ENCODE measurements at regions of chr7 and their contacts with region 1.

Region 1: DNA sequence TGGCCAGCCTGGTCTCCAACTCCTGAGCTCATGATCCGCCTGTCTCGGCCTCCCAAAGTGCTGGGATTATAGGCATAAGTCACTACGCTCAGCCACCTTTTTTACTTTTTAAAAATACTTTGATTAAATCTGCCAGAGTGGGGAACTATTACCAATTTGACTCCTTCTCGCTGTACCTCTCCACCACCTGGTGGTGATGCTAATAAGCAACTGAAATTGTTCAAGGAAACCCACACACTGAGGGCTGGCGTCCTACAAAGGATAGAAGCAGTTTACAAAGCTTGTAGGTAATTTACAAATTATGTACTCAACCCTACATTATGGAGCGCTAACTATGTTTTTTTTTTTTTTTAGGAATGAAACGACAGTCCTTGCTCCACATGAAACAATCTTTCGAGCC is 111.1 kb downstream of the CPED1 start:
- DNase-seq: no peak
- H3K4me3 ChIP-seq: no peak overlapping the region
- H3K27ac ChIP-seq: no peak overlapping the region
- H3K4me1 ChIP-seq: no peaks in the 10 kb centered on the region
- H3K27me3 ChIP-seq: no peaks in the 10 kb centered on the region
- CTCF ChIP-seq: no peak
- POLR2A ChIP-seq: no peak

Region 2: DNA sequence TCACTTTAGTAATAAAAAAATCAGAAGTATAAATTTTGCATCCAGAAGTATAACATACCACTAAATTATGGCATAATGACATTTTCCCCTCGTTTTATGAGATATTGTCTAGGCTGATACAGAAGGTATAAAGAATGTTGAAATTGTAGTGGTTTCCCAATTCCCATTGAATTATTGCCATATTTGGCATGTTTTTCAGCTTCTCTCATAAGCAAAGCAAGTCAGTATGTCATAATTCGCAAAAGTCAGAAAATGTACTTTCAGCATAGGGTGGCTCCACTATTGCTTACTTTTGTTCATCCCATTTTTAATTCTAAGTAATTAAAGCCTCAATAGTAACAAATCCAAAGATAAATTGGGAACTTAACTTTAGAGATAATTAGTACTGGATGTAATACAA is 753.7 kb after region 1 on chr7:
- intact Hi-C with region 1: loop called (anchors 5 kb)
- DNase-seq: no peak
- H3K4me3 ChIP-seq: no peak overlapping the region
- H3K27ac ChIP-seq: no peak overlapping the region
- H3K4me1 ChIP-seq: no peaks in the 10 kb centered on the region
- H3K27me3 ChIP-seq: no peaks in the 10 kb centered on the region
- CTCF ChIP-seq: no peak
- POLR2A ChIP-seq: no peak

Region 3: DNA sequence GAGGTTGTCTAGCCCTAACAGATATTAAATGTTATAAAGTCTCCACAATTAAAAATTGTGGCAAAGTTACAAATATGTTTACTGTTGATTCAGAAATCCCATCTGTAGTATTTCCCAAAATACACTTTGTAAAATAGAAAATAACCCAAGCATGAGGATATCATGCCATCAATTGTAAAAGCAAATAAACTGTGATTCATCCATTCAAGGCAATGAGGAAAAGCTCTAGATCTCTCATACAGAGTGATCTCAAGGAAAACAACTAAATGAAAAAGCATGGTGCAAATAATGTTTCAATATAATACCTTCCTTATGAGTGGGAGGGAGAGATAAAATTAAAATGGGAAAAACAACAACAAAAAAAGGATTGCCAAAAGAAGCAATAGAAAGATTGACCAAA is 1725.6 kb after region 1 on chr7:
- intact Hi-C with region 1: no loop called
- DNase-seq: no peak
- H3K4me3 ChIP-seq: no peak overlapping the region
- H3K27ac ChIP-seq: no peak overlapping the region
- H3K4me1 ChIP-seq: no peaks in the 10 kb centered on the region
- H3K27me3 ChIP-seq: no peaks in the 10 kb centered on the region
- CTCF ChIP-seq: no peak
- POLR2A ChIP-seq: no peak